Calu3 (cell line): ENCODE measurements at regions of chr2 and their contacts with region 1.

Region 1: DNA sequence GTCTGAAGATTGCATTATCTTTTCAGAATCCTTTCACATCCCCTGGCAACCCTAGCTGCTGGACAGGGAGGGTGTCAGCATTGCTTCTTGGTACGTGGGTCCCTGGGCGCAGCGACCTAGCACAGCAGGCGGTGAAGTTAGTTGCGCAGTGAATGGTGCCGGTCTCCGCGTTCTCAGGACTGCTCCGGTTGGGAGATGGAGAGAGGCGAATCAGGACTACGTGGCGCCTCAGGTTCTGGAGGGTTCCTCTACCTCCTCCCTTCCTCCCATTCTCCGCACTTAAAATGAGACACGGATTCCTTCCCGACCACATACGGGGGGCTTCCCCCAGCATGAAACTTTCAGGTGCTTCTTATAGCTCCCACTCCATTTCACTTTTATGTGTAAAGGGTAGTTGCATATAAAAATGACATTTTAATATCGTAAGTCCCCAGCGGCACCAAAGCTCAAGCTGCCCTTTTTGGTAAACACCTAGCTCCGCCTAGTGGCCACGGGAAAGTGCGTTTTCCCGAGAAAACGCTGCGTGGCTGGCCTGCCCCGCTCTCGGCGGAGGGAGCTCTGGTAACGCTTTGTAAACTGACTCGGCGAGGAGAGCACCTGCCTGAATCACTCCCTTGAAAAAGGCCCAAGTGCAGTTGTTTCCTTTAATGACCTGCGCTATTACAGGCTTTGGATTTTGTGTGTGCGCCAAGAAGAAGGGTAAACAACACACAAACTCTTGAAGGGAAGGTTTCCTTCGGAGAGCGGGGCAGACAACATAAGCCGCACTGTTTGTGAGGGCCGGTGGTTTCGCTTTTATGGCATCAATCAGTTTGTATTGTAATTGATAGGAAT is 32.9 kb upstream of the INHBB start:
- DNase-seq: peak; percentile 85
- H3K4me3 Mint-ChIP-seq: peak overlapping the region; percentile 79
- H3K27ac Mint-ChIP-seq: peak overlapping the region; percentile 42
- H3K4me1 Mint-ChIP-seq: peaks cover 9% of the 10 kb centered on the region
- H3K27me3 Mint-ChIP-seq: peaks cover 43% of the 10 kb centered on the region
- CTCF ChIP-seq: peak; percentile 82

Region 2: GRCh38 chr2:119702918-119703401 is 610.1 kb before region 1 on chr2:
- CTCF ChIA-PET with region 1: no interaction called
- intact Hi-C with region 1: loop called (anchors 5 kb)
- DNase-seq: peak; percentile 83
- H3K4me3 Mint-ChIP-seq: no peak overlapping the region
- H3K27ac Mint-ChIP-seq: no peak overlapping the region
- H3K4me1 Mint-ChIP-seq: no peaks in the 10 kb centered on the region
- H3K27me3 Mint-ChIP-seq: no peaks in the 10 kb centered on the region
- CTCF ChIP-seq: peak; percentile 96

Region 3: GRCh38 chr2:120228531-120228930 is 84.5 kb before region 1 on chr2:
- CTCF ChIA-PET with region 1: interaction called, 9 read pairs
- intact Hi-C with region 1: loop called (anchors 1 kb)
- DNase-seq: no peak
- H3K4me3 Mint-ChIP-seq: no peak overlapping the region
- H3K27ac Mint-ChIP-seq: no peak overlapping the region
- H3K4me1 Mint-ChIP-seq: peaks cover 8% of the 10 kb centered on the region
- H3K27me3 Mint-ChIP-seq: no peaks in the 10 kb centered on the region
- CTCF ChIP-seq: no peak

Region 4: DNA sequence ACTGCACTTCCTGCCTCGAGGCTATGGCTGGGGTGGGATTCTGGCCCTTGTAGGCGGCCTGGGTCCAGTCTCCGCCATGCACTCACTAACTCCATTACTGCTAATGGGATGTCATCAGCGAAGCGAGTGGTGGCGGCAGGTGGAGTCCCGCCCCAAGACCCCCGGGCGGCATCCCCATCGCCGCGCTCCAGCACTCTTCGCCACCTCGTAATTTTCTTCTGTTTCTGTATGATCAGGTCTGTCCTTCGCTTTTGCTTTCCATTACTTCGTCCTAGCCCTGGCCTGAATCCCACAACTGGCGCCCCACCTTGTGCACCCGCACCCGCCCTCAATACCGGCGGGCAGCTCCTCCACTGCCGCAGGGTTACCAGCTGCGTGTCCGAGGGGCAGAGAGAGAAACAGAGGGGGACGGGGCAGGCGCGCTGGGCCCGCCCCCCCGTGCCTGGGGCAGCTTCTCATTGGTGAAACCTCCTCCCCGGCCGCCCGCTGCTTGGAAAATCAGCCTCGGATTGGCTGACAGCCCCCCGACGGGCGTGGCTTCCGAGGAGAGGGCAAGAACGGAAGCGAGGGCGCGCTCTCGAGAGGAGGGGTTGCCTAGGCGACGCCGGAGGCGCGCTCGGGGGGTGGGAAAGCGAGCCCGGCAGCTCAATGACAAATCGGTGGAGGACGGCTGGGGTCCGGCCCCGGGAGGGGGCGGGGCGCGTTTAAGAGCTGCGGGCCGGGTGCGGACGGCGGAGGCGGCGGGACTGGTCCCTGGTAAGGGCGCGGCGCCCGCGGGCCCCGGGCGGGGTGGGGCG is 60.7 kb before region 1 on chr2 and contains the start of gene RALB:
- CTCF ChIA-PET with region 1: interaction called, 14 read pairs
- intact Hi-C with region 1: loop called (anchors 1 kb)
- DNase-seq: peak; percentile 99
- H3K4me3 Mint-ChIP-seq: peak within 1 kb of the TSS; percentile 96
- H3K27ac Mint-ChIP-seq: peak within 1 kb of the TSS; percentile 60
- H3K4me1 Mint-ChIP-seq: peaks cover 40% of the 10 kb centered on the region
- H3K27me3 Mint-ChIP-seq: peaks cover 13% of the 10 kb centered on the region
- CTCF ChIP-seq: no peak
- total RNA-seq, gene RALB: 40.2 and 41.3 TPM in 2 replicates

Region 5: DNA sequence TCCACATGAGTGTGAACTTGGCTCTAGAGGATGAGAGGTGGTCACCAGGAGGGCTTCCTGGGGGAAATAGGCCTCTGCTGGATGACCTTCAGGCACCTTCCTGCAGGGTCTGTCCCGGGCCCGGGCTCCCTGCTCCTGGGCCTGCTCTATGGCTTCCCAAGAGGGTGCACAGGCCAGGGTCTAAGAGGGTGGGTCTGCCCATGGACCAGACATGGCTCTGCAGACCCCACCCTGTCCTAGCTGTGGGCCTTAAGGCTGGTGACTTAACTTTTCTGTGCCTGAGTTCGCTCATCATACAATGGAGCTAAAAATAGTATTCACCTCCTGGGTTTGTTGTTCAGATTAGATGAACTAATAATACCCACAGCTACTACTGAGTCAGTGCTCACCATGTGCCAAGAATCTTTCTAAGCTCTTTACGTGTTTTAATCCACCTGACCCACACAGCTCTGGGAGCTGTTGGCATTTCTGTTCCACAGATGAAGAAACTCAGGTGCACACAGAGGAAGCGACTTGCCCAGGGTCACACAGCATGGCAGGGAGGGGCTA is 47.3 kb after region 1 on chr2:
- CTCF ChIA-PET with region 1: no interaction called
- intact Hi-C with region 1: no loop called
- DNase-seq: no peak
- H3K4me3 Mint-ChIP-seq: no peak overlapping the region
- H3K27ac Mint-ChIP-seq: no peak overlapping the region
- H3K4me1 Mint-ChIP-seq: no peaks in the 10 kb centered on the region
- H3K27me3 Mint-ChIP-seq: peaks cover 88% of the 10 kb centered on the region
- CTCF ChIP-seq: no peak

Region 6: DNA sequence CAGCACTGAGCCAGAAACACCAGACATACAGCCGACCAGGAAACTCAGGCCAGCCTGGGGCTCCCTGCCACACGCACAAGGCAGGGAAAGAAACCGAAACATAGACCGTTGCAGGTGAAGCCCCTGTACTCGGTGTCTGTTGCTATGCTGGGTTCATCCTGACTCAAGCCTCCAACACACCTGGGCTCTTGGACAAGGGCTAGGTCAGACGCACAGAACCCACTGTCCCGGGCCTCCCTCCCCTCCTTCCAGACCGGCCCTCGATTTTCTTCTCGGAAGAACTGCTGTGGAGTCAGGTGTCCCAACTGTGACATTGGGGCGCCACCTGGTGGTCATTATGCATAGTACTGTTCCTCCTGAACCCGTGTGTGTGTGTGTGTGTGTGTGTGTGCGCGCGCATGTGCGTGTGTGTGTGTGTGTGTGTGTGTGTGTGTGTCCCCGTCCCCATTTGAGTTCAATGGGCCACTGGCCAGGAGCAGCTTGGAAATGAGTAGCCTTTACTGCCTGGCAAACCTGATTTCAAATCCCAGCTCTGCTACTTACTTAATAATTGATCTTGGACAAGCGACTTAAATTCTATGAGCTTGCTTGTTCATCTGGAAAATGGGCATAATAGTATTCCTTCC is 367.2 kb after region 1 on chr2:
- CTCF ChIA-PET with region 1: interaction called, 4 read pairs
- intact Hi-C with region 1: loop called (anchors 1 kb)
- DNase-seq: peak; percentile 84
- H3K4me3 Mint-ChIP-seq: no peak overlapping the region
- H3K27ac Mint-ChIP-seq: peak overlapping the region; percentile 63
- H3K4me1 Mint-ChIP-seq: no peaks in the 10 kb centered on the region
- H3K27me3 Mint-ChIP-seq: peaks cover 73% of the 10 kb centered on the region
- CTCF ChIP-seq: no peak